ENCODE measurements at regions of chr19 and their contacts with region 1.

Region 1: GRCh38 chr19:10259162-10259905 is 7.3 kb downstream of the MRPL4 start:
- DNase-seq: peak; percentile 83 to 86
- H3K4me3 ChIP-seq: no peak overlapping the region
- H3K27ac ChIP-seq: 0 out of 2 replicates have a peak overlapping the region, but pooled peaks have one; percentile 5
- H3K4me1 ChIP-seq: peaks cover 18% of the 10 kb centered on the region
- H3K27me3 ChIP-seq: no peaks in the 10 kb centered on the region
- CTCF ChIP-seq: peak; percentile 89

Region 2: GRCh38 chr19:9827289-9828238 is 431.8 kb before region 1 on chr19 and contains the start of gene UBL5:
- CTCF ChIA-PET with region 1: no interaction called
- POLR2A ChIA-PET with region 1: interaction called, 22 read pairs
- intact Hi-C with region 1: no loop called
- DNase-seq: peak; percentile 87 to 89
- H3K4me3 ChIP-seq: peak within 1 kb of the TSS; percentile 81
- H3K27ac ChIP-seq: peak within 1 kb of the TSS; percentile 66
- H3K4me1 ChIP-seq: peaks cover 16% of the 10 kb centered on the region
- H3K27me3 ChIP-seq: no peaks in the 10 kb centered on the region
- CTCF ChIP-seq: no peak
- total RNA-seq, gene UBL5: 400 and 403 TPM in 2 replicates

Region 3: DNA sequence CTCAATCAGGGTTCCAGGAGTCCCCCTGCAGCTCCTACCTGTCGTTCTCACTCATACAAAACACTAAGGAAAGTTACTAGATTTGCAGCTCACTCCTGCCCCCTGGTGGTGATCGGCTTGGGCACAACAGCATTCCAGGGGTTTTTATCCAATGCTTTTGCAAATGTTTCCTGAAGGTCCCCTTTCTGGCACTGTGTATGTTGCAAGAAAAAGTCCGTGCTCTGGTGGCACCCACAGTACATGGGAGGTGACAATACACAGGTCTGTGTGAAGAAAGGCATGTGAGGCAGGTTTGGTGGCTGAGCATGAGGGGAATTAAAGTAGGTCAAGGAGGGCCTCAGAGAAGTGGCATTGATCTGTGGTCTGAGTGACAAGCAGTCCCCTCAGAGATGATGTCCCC is 129.6 kb after region 1 on chr19:
- CTCF ChIA-PET with region 1: interaction called, 30 read pairs
- POLR2A ChIA-PET with region 1: no interaction called
- intact Hi-C with region 1: loop called (anchors 1 kb)
- DNase-seq: peak; percentile 62 to 81
- H3K4me3 ChIP-seq: no peak overlapping the region
- H3K27ac ChIP-seq: no peak overlapping the region
- H3K4me1 ChIP-seq: no peaks in the 10 kb centered on the region
- H3K27me3 ChIP-seq: no peaks in the 10 kb centered on the region
- CTCF ChIP-seq: peak; percentile 99

Region 4: GRCh38 chr19:10403137-10404021 is 144.0 kb after region 1 on chr19 and contains the start of gene CDC37:
- CTCF ChIA-PET with region 1: interaction called, 10 read pairs
- POLR2A ChIA-PET with region 1: interaction called, 3 read pairs
- intact Hi-C with region 1: no loop called
- DNase-seq: peak; percentile 90 to 96
- H3K4me3 ChIP-seq: peak within 1 kb of the TSS; percentile 89
- H3K27ac ChIP-seq: peak within 1 kb of the TSS; percentile 39
- H3K4me1 ChIP-seq: peaks cover 20% of the 10 kb centered on the region
- H3K27me3 ChIP-seq: peaks cover 21% of the 10 kb centered on the region; the same call in 1 of the 2 replicates
- CTCF ChIP-seq: no peak
- total RNA-seq, gene CDC37: 156 and 191 TPM in 2 replicates

Measured in PC-9 (cell line).